ENCODE measurements at regions of chr3 and their contacts with region 1.

Region 1: GRCh38 chr3:30667280-30667651 is 60.9 kb downstream of the TGFBR2 start:
- DNase-seq: no peak
- ATAC-seq: no peak

Region 2: GRCh38 chr3:30557746-30558303 is 109.4 kb before region 1 on chr3:
- intact Hi-C with region 1: no loop called
- DNase-seq: no peak
- ATAC-seq: no peak

Region 3: GRCh38 chr3:30628901-30629590 is 38.2 kb before region 1 on chr3:
- intact Hi-C with region 1: loop called (anchors 5 kb)
- DNase-seq: no peak
- ATAC-seq: peak; percentile 51

Measured in Right ventricle myocardium inferior (tissue), 1 donor.